ENCODE measurements at regions of chr13 and their contacts with region 1.

Region 1: GRCh38 chr13:24220086-24220703 is 59.7 kb downstream of the SPATA13 start:
- H3K4me3 Mint-ChIP-seq: no peak overlapping the region
- H3K27ac Mint-ChIP-seq: no peak overlapping the region
- H3K4me1 Mint-ChIP-seq: peaks cover 23% of the 10 kb centered on the region
- H3K27me3 Mint-ChIP-seq: no peaks in the 10 kb centered on the region

Region 2: DNA sequence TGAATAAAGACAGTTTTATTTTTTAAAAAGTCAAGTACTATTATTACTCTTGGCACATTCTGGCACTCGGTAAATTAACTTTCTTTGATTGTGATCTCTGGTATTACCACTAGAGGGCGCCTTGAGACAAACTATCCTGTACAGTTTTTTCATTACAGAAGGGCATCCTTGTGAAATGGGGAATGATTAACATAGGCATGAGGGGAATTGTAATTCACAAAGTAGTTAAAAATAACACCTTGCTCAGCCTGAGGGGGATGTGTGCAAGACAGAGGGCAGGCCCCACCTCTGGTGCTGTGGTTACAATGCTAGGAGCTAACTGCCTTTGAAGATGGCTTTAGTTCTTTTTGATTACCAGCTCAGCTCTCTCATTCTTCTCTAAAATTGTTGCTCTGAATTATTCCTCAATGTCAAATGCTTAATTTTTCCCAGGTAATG is 298.7 kb before region 1 on chr13:
- intact Hi-C with region 1: loop called (anchors 5 kb)
- H3K4me3 Mint-ChIP-seq: no peak overlapping the region
- H3K27ac Mint-ChIP-seq: no peak overlapping the region
- H3K4me1 Mint-ChIP-seq: peaks cover 11% of the 10 kb centered on the region
- H3K27me3 Mint-ChIP-seq: peaks cover 6% of the 10 kb centered on the region

Region 3: GRCh38 chr13:24020375-24020830 is 199.8 kb before region 1 on chr13:
- intact Hi-C with region 1: loop called (anchors 1 kb)
- H3K4me3 Mint-ChIP-seq: no peak overlapping the region
- H3K27ac Mint-ChIP-seq: no peak overlapping the region
- H3K4me1 Mint-ChIP-seq: no peaks in the 10 kb centered on the region
- H3K27me3 Mint-ChIP-seq: no peaks in the 10 kb centered on the region

Region 4: GRCh38 chr13:24053519-24054251 is 166.5 kb before region 1 on chr13:
- intact Hi-C with region 1: loop called (anchors 1 kb)
- H3K4me3 Mint-ChIP-seq: no peak overlapping the region
- H3K27ac Mint-ChIP-seq: no peak overlapping the region
- H3K4me1 Mint-ChIP-seq: peaks cover 24% of the 10 kb centered on the region
- H3K27me3 Mint-ChIP-seq: peaks cover 6% of the 10 kb centered on the region